Upper lobe of right lung (tissue), 1 donor: ENCODE measurements at regions of chr16 and their contacts with region 1.

Region 1: GRCh38 chr16:68040507-68041288 is 17.6 kb downstream of the DUS2 start:
- DNase-seq: peak; percentile 92
- ATAC-seq: peak; percentile 99
- H3K4me3 ChIP-seq: no peak overlapping the region
- H3K27ac ChIP-seq: peak overlapping the region; percentile 6
- H3K4me1 ChIP-seq: peaks cover 25% of the 10 kb centered on the region
- H3K27me3 ChIP-seq: no peaks in the 10 kb centered on the region
- CTCF ChIP-seq: peak; percentile 81

Region 2: DNA sequence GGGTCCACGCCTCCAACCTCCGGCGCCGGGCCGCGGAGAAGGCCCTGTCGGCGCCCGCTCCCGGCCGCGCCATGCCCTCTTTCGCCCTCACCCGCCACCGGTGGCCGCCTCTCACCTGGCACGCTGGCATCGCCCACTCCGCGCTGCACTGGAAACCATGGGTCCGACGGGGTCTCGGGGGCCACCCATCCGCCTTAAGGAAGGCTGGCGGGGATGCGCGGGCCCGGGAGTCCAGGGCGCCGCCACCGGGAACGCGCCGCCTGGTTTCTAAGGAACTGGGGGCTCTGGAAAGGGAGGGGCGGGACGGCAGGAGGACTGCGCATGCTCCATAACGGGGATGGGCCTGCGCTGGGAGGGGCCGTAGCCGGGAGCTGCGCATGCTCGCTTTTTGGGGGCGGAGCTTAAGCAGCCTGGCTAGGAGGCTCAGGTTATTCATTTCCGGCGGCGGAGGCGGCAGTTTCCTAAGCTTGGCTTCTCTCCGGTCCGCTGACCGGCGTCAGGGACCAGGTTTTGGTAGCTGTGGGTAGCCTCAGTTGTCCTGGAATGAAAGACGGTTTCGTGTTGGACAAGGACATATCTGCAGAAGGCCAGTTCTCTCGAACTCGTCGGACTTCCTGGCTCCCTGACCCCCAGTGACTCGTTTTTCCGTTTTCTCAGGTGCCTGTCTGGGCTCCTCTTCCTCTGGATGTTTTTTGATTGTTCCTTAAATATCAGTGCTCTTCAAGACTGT is 321.5 kb before region 1 on chr16 and contains the start of gene GFOD2:
- intact Hi-C with region 1: no loop called
- DNase-seq: peak; percentile 98
- ATAC-seq: peak; percentile 99
- H3K4me3 ChIP-seq: peak within 1 kb of the TSS; percentile 95
- H3K27ac ChIP-seq: peak within 1 kb of the TSS; percentile 89
- H3K4me1 ChIP-seq: peaks cover 13% of the 10 kb centered on the region
- H3K27me3 ChIP-seq: no peaks in the 10 kb centered on the region
- CTCF ChIP-seq: no peak
- total RNA-seq, gene GFOD2: 18.2 TPM

Region 3: DNA sequence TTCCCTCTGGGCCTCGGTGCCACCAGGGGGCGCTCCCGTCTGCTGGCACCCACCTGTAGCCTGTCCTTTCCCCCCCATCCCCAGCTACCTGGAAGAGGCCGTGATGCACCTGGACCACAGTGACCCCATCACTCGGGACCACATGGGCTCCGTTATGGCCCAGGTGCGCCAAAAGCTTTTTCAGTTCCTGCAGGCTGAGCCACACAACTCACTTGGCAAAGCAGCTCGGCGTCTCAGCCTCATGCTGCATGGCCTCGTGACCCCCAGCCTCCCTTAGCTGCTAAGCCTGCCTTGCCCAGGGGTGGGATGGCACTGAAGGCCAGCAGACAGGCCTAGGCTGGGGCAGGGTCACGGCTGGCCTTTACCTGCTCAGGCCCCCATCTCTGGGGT is 156.8 kb before region 1 on chr16:
- intact Hi-C with region 1: loop called (anchors 10 kb)
- DNase-seq: peak; percentile 87
- ATAC-seq: peak; percentile 75
- H3K4me3 ChIP-seq: no peak overlapping the region
- H3K27ac ChIP-seq: no peak overlapping the region
- H3K4me1 ChIP-seq: peaks cover 4% of the 10 kb centered on the region
- H3K27me3 ChIP-seq: no peaks in the 10 kb centered on the region
- CTCF ChIP-seq: peak; percentile 91

Region 4: DNA sequence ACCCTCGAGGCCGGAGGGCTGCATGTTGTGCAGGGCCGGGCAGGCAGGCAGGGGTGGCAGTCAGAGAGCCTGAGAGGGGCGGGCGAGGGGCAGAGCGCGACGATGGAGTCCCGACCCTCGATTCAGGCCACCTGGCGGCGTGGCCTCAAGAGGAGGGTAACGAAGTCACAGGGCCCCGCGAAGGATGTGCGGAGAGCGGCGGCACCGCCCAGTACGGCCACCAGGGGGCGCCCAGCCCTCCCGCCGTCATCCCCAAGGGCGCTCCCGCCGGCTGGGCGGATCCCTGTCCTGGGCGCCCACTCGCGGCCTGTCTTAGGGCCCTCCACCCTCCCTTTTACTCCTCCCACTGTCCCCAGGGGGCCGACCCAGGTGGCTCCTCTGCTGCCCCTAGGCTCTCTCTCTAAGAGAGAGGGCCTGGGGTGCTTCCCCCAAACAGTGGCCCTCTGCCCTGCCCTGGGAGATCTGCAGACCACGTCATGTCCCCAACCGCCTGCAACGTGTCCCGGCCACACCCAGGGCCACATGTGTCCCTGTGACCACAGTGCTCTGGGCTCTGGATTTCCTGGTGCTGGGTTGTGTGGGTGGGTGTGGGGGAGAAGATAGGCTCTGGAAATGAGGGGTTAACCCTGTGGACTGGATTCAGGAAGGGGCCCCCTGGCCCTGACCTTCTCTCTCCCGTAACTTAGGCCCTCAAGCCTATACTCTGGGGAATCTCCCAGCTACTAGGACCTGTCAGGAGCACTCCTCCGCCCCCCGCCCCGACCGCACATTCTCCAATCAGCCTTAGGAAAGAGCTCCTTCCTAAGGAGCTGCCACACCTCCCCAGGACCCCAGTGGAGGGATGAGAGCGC is 47.3 kb before region 1 on chr16:
- intact Hi-C with region 1: loop called (anchors 5 kb)
- DNase-seq: peak; percentile 93
- ATAC-seq: peak; percentile 96
- H3K4me3 ChIP-seq: peak overlapping the region; percentile 45
- H3K27ac ChIP-seq: peak overlapping the region; percentile 90
- H3K4me1 ChIP-seq: peaks cover 11% of the 10 kb centered on the region
- H3K27me3 ChIP-seq: no peaks in the 10 kb centered on the region
- CTCF ChIP-seq: peak; percentile 99